ENCODE measurements at regions of chr9 and their contacts with region 1.

Region 1: DNA sequence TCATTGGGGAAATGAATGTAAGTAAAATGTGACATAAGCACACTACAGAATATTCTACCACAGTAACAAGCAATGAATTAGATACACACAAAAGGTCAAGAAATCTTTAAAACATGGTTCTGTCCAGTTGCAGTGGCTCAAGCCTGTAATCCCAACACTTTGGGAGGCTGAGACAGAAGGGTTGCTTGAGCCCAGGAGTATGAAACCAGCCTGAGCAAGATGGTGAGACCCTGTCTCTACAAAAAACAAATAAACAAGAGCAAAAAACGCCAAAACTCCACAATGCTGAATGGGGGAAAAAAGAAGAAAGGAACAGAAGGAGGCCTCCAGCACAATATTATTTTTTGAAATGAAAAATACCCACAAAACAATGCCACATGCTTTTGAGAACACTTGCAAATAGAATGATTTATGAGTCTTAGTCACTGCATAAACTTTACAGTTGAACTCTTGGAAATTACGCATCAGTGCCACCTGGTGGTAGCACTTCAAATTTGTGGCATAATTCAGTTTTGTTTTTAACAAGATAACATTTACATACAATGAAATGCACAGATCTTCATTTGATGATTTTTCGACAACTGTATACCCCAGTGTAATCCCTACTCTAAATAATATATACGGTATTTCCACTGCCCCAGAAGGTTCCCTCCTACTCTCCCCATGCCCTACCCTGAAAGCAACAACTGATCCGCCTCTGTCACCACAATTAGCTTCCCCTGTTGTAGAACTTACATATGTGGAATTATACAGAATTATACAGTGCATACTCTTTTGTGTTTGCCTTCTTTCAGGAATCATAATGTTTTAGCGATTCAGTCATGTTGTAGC is 14.4 kb upstream of the SPINK4 start:
- DNase-seq: peak; percentile 48 to 70 (median 58)
- H3K4me3 ChIP-seq: no peak overlapping the region
- H3K4me3 Mint-ChIP-seq: no peak overlapping the region
- H3K27ac ChIP-seq: no peak overlapping the region
- H3K27ac Mint-ChIP-seq: peak overlapping the region in 1 of 8 donors; percentile 52
- H3K4me1 ChIP-seq: no peaks in the 10 kb centered on the region
- H3K4me1 Mint-ChIP-seq: peaks cover 12 to 21% (median 20%) of the 10 kb centered on the region in 3 donors
- H3K27me3 ChIP-seq: no peaks in the 10 kb centered on the region
- H3K27me3 Mint-ChIP-seq: peaks cover 0 to 10% of the 10 kb centered on the region in 2 donors

Region 2: DNA sequence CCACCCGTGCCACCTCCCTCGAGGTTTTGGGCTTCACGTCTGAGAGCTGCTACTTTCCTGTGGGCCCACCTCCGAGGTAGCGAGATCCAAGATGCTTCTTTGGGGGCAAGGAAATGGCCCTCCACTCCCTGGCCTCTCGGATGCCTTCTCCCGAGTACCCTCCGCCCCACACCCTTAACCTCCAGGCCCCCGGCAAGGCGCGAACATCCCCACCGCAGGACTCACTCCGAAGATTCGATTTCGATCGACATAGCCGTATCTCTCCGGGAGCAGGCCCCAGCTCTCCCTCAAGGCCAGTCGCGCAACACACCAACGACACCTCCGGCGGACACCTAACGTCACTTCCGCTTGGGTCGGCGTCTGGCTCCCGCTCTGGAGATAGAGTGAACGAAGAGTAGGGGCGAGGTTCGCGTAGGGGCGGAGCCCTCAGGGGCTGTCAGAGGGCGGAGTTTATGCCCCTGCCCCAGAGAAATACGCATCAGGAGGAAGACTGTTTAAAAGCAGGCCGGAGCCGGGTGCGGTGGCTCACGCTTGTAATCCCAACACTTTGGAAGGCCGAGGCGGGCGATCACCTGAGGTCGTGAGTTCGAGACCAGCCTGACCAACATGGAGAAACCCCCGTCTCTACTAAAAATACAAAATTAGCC is 149.1 kb before region 1 on chr9 and contains the start of gene SMU1:
- CTCF ChIA-PET with region 1: interaction called, 24 read pairs
- POLR2A ChIA-PET with region 1: interaction called, 5 read pairs
- DNase-seq: peak; percentile 92 to 97 (median 94)
- H3K4me3 ChIP-seq: peak within 1 kb of the TSS; percentile 86
- H3K4me3 Mint-ChIP-seq: peak within 1 kb of the TSS; percentile 92 to 100 (median 99)
- H3K27ac ChIP-seq: peak within 1 kb of the TSS; percentile 95
- H3K27ac Mint-ChIP-seq: peak within 1 kb of the TSS; percentile 95 to 100 (median 100)
- H3K4me1 ChIP-seq: peaks cover 22% of the 10 kb centered on the region
- H3K4me1 Mint-ChIP-seq: peaks cover 30 to 56% (median 46%) of the 10 kb centered on the region in 3 donors
- H3K27me3 ChIP-seq: no peaks in the 10 kb centered on the region
- H3K27me3 Mint-ChIP-seq: no peaks in the 10 kb centered on the region
- total RNA-seq, gene SMU1: 27.5 to 27.6 TPM